ENCODE measurements at regions of chr4 and their contacts with region 1.

Region 1: DNA sequence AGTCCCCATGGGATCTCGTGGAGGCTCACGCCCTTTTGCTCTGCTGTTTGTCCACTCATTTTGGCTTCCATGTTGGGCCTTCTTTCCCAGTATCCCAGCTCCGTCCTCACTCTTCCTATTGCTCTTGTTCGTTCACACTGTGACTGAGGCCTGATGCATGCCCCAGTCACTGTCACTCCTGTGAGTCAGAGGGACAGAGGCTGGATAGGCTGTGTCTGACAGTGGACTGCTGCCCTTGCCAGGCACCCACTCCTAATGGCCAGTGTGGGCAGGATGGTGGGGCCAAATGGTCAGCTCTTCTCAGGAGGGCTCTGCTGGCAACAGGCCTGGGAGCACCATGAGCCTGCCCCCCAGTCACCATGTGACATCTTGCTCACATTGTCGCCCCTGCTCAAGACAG is 40.0 kb downstream of the HADH start:
- DNase-seq: no peak
- ATAC-seq: no peak

Region 2: GRCh38 chr4:108192018-108192417 is 162.3 kb after region 1 on chr4:
- intact Hi-C with region 1: no loop called
- DNase-seq: no peak
- ATAC-seq: no peak

Region 3: DNA sequence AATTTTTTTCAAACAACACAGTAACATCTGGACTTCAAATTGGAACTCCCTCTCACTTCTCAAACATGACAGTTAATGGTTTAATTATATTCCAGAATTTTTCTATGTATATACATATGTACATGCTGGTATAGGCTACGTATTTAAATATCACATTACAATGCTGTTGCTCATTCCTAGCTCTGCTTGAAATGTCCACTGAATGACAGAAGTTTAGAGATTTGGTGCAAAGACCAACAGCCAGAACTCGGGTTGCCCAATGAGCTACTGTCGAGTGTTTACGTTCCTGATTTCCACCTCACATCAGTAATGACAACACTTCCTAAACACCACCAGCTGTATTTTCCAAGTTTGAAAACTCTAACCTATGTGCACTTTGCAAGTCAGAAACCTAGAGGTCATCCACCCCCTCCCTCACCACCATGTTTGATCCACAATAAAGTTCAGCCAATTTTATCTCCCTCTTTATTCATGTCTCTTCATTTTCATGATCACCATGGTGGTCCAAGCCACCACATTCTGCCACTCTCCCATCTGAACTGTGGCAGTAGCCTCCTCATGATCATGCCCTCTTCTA is 541.4 kb after region 1 on chr4:
- intact Hi-C with region 1: loop called (anchors 10 kb)
- DNase-seq: no peak
- ATAC-seq: no peak